IMR-90 (cell line): ENCODE measurements at regions of chr11 and their contacts with region 1.

Region 1: GRCh38 chr11:126480410-126481302 is 125.2 kb downstream of the ST3GAL4 start:
- DNase-seq: peak; percentile 88
- ATAC-seq: peak; percentile 87
- H3K4me3 ChIP-seq: no peak overlapping the region
- H3K27ac ChIP-seq: peak overlapping the region; percentile 53
- H3K4me1 ChIP-seq: peaks cover 19% of the 10 kb centered on the region
- H3K27me3 ChIP-seq: no peaks in the 10 kb centered on the region
- CTCF ChIP-seq: peak; percentile 92
- POLR2A ChIP-seq: no peak
- RAD21 ChIP-seq: peak; percentile 71

Region 2: GRCh38 chr11:126440792-126441514 is 39.7 kb before region 1 on chr11:
- CTCF ChIA-PET with region 1: interaction called, 11 read pairs
- POLR2A ChIA-PET with region 1: no interaction called
- dilution Hi-C with region 1: no loop called
- in situ Hi-C with region 1: no loop called
- intact Hi-C with region 1: loop called (anchors 1 kb)
- DNase-seq: peak; percentile 59
- ATAC-seq: peak; percentile 96
- H3K4me3 ChIP-seq: no peak overlapping the region
- H3K27ac ChIP-seq: no peak overlapping the region
- H3K4me1 ChIP-seq: no peaks in the 10 kb centered on the region
- H3K27me3 ChIP-seq: no peaks in the 10 kb centered on the region; the same call in 1 of the 2 replicates
- CTCF ChIP-seq: peak; percentile 96
- POLR2A ChIP-seq: no peak
- RAD21 ChIP-seq: peak; percentile 97

Region 3: DNA sequence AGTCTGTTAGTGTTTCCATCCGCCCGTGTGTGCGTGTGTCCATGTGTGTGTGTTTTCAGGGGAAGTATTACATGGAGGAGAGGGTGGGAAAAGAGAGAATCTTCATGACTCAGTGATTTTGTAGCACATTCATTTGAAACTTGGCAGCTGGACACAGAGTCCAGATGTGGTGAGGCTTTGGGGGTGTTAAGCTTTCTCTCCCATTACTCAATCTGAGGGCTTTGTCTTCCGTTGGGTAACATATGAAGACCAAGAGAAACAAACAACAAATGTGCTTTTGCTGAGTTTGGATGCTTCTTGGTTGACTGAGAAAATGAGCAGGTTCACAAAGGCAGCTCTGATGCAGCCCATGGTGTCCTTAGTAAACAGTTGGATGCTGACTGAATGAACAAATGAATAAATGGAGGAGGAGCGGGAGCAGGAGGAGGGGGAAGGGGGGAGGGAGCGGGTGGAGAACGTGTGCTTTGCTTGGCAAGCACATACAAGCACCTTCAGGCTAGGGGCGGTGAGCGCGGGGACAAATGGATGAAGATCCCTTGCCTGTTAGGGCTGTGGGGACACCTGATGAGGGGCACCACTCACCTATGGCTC is 20.9 kb before region 1 on chr11:
- CTCF ChIA-PET with region 1: interaction called, 12 read pairs
- POLR2A ChIA-PET with region 1: no interaction called
- dilution Hi-C with region 1: no loop called
- in situ Hi-C with region 1: no loop called
- intact Hi-C with region 1: no loop called
- DNase-seq: peak; percentile 91
- ATAC-seq: peak; percentile 76
- H3K4me3 ChIP-seq: no peak overlapping the region
- H3K27ac ChIP-seq: no peak overlapping the region
- H3K4me1 ChIP-seq: peaks cover 2% of the 10 kb centered on the region; the same call in 1 of the 2 replicates
- H3K27me3 ChIP-seq: no peaks in the 10 kb centered on the region
- CTCF ChIP-seq: no peak
- POLR2A ChIP-seq: no peak
- RAD21 ChIP-seq: no peak

Region 4: GRCh38 chr11:126465573-126466188 is 15.0 kb before region 1 on chr11:
- CTCF ChIA-PET with region 1: interaction called, 12 read pairs
- POLR2A ChIA-PET with region 1: no interaction called
- dilution Hi-C with region 1: no loop called
- in situ Hi-C with region 1: no loop called
- intact Hi-C with region 1: no loop called
- DNase-seq: no peak
- ATAC-seq: no peak; the same call in 1 of the 2 replicates
- H3K4me3 ChIP-seq: no peak overlapping the region
- H3K27ac ChIP-seq: no peak overlapping the region
- H3K4me1 ChIP-seq: no peaks in the 10 kb centered on the region
- H3K27me3 ChIP-seq: no peaks in the 10 kb centered on the region; the same call in 1 of the 2 replicates
- CTCF ChIP-seq: no peak
- POLR2A ChIP-seq: no peak
- RAD21 ChIP-seq: no peak